ENCODE measurements at regions of chr3 and their contacts with region 1.

Region 1: GRCh38 chr3:141402476-141403171 is 34.3 kb downstream of the ZBTB38 start:
- DNase-seq: peak; percentile 47 to 71
- ATAC-seq: peak; percentile 70 to 71
- H3K4me3 ChIP-seq: peak overlapping the region; percentile 53 to 70 (median 68)
- H3K27ac ChIP-seq: peak overlapping the region; percentile 92 to 99 (median 96)
- H3K4me1 ChIP-seq: peaks cover 37 to 39% of the 10 kb centered on the region in 2 donors
- H3K27me3 ChIP-seq: no peaks in the 10 kb centered on the region
- CTCF ChIP-seq: peak in 1 of 5 experiments; percentile 33
- POLR2A ChIP-seq: peak; percentile 55 to 75

Region 2: DNA sequence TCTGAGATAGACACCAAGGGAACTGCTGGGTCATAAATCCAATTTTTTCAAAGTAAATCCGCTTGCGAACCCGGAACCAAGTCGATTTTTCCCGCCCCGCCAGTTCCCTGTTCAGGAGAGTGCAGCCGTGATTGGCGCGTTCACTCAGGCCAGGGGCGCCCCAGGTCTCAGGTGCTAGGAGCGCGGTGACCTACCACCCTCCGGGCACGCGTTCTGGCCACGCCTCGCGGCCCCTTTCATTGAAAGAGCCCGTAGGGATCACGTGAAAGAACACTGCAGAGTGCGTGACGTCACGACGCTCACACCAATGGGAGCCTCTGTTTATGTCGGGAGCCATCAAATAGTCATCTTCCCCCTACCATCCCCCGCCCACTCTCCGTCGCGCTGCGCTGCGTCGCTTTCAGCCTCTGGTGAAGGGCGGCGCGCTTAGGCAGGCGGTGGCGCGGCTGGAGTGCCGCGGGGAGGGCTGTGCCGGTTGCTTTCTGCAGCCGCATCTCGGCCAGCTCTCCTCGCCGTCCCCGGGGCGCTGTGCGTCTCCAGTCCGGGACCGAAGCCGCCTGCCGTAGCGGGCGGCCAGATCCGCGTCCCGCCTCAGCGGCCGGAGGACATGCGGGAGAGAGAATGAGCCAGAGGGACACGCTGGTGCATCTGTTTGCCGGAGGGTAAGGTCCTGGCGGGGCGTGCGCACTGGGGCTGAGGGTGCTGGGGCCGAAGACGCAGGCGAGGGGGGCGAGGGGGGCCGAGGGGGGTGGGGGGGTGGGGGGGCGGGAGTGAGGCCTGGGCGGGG is 461.0 kb before region 1 on chr3 and contains the start of gene SLC25A36:
- in situ Hi-C with region 1: loop called in 1 of 4 experiments (anchors 25 kb)
- intact Hi-C with region 1: no loop called
- DNase-seq: peak; percentile 96 to 97
- ATAC-seq: peak; percentile 99
- H3K4me3 ChIP-seq: peak within 1 kb of the TSS; percentile 66 to 97 (median 94)
- H3K27ac ChIP-seq: peak within 1 kb of the TSS; percentile 97 to 99 (median 99)
- H3K4me1 ChIP-seq: peaks cover 36 to 38% of the 10 kb centered on the region in 2 donors
- H3K27me3 ChIP-seq: no peaks in the 10 kb centered on the region
- CTCF ChIP-seq: peak in 1 of 5 experiments; percentile 30
- POLR2A ChIP-seq: peak; percentile 96 to 98
- total RNA-seq, gene SLC25A36: 17.3 to 74.7 (median 35.0) TPM

Region 3: GRCh38 chr3:141294848-141295247 is 107.8 kb before region 1 on chr3:
- in situ Hi-C with region 1: no loop called
- intact Hi-C with region 1: no loop called
- DNase-seq: no peak
- ATAC-seq: peak in 1 of 2 donors; percentile 53
- H3K4me3 ChIP-seq: peak overlapping the region; percentile 24 to 46 (median 42)
- H3K27ac ChIP-seq: peak overlapping the region in 3 of 4 donors; percentile 36 to 47 (median 45)
- H3K4me1 ChIP-seq: peaks cover 0 to 26% of the 10 kb centered on the region in 2 donors
- H3K27me3 ChIP-seq: no peaks in the 10 kb centered on the region
- CTCF ChIP-seq: no peak
- POLR2A ChIP-seq: no peak

Region 4: GRCh38 chr3:141380987-141381386 is 21.6 kb before region 1 on chr3:
- in situ Hi-C with region 1: no loop called
- intact Hi-C with region 1: loop called (anchors 2 kb)
- DNase-seq: no peak
- ATAC-seq: peak in 1 of 2 donors; percentile 41
- H3K4me3 ChIP-seq: no peak overlapping the region
- H3K27ac ChIP-seq: no peak overlapping the region
- H3K4me1 ChIP-seq: peaks cover 0 to 8% of the 10 kb centered on the region in 2 donors
- H3K27me3 ChIP-seq: no peaks in the 10 kb centered on the region
- CTCF ChIP-seq: no peak
- POLR2A ChIP-seq: no peak

Region 5: GRCh38 chr3:141441381-141442364 is 39.0 kb after region 1 on chr3:
- in situ Hi-C with region 1: no loop called
- intact Hi-C with region 1: loop called (anchors 5 kb)
- DNase-seq: peak; percentile 41 to 76
- ATAC-seq: peak; percentile 86 to 92
- H3K4me3 ChIP-seq: no peak overlapping the region
- H3K27ac ChIP-seq: peak overlapping the region; percentile 60 to 79 (median 67)
- H3K4me1 ChIP-seq: peaks cover 19 to 28% of the 10 kb centered on the region in 2 donors
- H3K27me3 ChIP-seq: no peaks in the 10 kb centered on the region
- CTCF ChIP-seq: peak; percentile 65 to 88 (median 70)
- POLR2A ChIP-seq: no peak

Measured in gastrocnemius medialis (tissue), 4 donors.